Adrenal gland (tissue), 19 donors: ENCODE measurements at regions of chr12 and their contacts with region 1.

Region 1: GRCh38 chr12:10130042-10130441 is at the start of gene CLEC7A:
- DNase-seq: no peak
- H3K4me3 ChIP-seq: peak within 1 kb of the TSS in 1 of 4 donors; percentile 39
- H3K27ac ChIP-seq: peak within 1 kb of the TSS in 4 of 5 donors; percentile 2 to 86 (median 58)
- H3K4me1 ChIP-seq: no peaks in the 10 kb centered on the region
- H3K27me3 ChIP-seq: no peaks in the 10 kb centered on the region
- CTCF ChIP-seq: no peak
- POLR2A ChIP-seq: peak in 1 of 2 donors; percentile 35
- total RNA-seq, gene CLEC7A: 3.3 to 23.6 (median 8.8) TPM

Region 2: DNA sequence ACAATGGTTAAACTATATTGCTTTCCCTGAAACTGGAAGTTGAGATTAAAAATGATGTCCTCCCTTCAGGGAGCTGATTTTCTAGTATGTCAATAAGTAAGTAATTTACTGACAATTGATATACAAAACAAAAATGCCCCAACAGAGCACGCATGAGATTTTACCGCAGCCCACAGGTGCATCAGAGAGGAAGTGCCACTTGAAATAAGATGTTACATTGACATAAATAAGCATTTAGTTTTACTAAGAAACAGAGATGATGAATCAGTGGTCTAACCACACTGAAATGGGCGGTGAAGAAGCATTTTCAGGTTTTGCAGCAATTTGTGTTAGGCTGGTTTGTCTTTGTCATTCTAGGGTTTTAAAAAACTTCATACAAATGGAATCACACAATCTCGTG is 388.3 kb before region 1 on chr12:
- intact Hi-C with region 1: loop called in 1 of 2 experiments (anchors 10 kb)
- DNase-seq: no peak
- H3K4me3 ChIP-seq: no peak overlapping the region
- H3K27ac ChIP-seq: no peak overlapping the region
- H3K4me1 ChIP-seq: no peaks in the 10 kb centered on the region
- H3K27me3 ChIP-seq: peaks cover 4% of the 10 kb centered on the region
- CTCF ChIP-seq: no peak
- POLR2A ChIP-seq: no peak

Region 3: DNA sequence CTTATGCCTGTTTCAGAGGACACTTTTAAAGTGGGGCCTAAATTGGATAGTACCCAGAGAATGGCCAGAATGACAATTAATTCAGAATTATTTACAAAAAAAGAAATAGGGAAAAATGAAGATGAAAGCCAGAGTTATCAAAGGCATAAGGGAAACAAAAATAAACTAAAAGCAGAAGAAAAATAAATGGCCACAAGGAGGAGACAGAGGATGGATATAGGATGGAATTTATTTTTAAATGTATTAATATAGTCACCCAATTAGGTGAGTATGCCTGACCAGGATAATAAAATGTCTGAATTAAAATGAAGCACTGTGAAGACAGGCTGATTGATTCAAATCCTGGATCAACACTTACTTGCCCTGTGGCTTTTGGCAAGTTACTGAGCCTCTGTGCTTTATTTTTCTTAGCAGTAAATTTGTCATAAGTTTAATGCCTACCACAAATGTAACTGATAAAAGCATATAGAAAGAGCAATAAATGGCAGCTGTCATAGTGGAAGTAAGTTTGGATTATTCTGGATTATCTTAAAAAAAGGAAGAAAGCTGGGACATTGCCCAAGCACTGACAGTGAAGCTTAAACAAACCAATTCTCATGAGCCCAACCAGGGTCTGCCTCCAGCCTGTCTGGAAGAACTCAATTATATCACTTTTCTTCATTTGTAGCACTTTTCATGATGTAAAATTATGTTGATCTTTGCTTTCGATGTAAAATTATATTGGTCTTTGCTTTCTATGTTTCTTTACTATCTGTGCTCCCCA is 96.1 kb before region 1 on chr12:
- intact Hi-C with region 1: loop called in 1 of 2 experiments (anchors 10 kb)
- DNase-seq: peak in 1 of 7 donors; percentile 15
- H3K4me3 ChIP-seq: no peak overlapping the region
- H3K27ac ChIP-seq: no peak overlapping the region
- H3K4me1 ChIP-seq: no peaks in the 10 kb centered on the region
- H3K27me3 ChIP-seq: no peaks in the 10 kb centered on the region
- CTCF ChIP-seq: peak; percentile 19 to 72 (median 48)
- POLR2A ChIP-seq: no peak

Region 4: GRCh38 chr12:10293570-10294227 is 163.7 kb after region 1 on chr12:
- intact Hi-C with region 1: no loop called
- DNase-seq: no peak
- H3K4me3 ChIP-seq: no peak overlapping the region
- H3K27ac ChIP-seq: no peak overlapping the region
- H3K4me1 ChIP-seq: no peaks in the 10 kb centered on the region
- H3K27me3 ChIP-seq: no peaks in the 10 kb centered on the region
- CTCF ChIP-seq: no peak
- POLR2A ChIP-seq: no peak